ENCODE measurements at regions of chr12 and their contacts with region 1.

Region 1: GRCh38 chr12:25332143-25332542 is 81.4 kb upstream of the KRAS start:
- DNase-seq: peak in 1 of 6 donors; percentile 58
- ATAC-seq: peak; percentile 22 to 77 (median 48)
- H3K4me3 ChIP-seq: no peak overlapping the region
- H3K27ac ChIP-seq: peak overlapping the region in 1 of 4 donors; percentile 54
- H3K4me1 ChIP-seq: peaks cover 0 to 4% (median 4%) of the 10 kb centered on the region in 3 donors
- H3K27me3 ChIP-seq: no peaks in the 10 kb centered on the region
- CTCF ChIP-seq: no peak

Region 2: DNA sequence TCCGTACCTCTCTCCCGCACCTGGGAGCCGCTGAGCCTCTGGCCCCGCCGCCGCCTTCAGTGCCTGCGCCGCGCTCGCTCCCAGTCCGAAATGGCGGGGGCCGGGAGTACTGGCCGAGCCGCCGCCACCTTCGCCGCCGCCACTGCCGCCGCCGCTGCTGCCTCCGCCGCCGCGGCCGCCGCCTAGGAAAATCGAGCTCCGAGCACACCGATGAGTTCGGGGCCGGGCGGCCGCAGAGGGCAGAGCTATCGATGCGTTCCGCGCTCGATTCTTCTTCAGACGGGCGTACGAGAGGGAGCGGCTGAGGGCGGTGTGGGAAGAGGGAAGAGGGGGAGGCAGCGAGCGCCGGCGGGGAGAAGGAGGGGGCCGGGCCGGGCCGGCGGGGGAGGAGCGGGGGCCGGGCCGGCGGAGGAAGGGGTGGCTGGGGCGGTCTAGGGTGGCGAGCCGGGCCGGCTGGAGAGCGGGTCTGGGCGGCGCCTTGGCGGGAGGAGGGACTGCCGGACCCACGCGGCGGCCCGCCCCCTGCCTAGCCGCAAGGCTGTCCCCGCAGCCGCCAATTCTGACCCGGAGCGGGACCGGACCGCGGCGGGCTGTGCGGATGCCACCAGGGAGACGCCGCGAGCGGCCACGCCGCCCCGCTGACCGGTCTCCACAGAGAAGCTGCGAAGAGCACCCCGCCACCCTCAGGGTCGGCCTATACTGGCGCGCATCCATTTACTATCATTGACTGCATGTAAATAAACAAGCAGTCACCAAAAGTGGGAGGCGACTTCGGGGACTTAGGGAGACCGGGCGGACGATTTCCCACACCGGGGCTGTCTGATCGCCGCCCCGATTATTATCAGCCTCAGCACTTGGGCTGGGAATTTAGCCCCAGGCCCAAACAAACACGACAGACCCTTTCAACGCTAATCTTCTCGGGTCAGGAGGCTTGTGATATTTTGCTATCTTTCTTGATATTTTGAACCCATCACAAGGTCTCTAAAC is 81.1 kb before region 1 on chr12 and contains the start of gene KRAS:
- intact Hi-C with region 1: loop called in 1 of 3 experiments (anchors 5 kb)
- DNase-seq: peak; percentile 95 to 99 (median 97)
- ATAC-seq: peak; percentile 87 to 93 (median 91)
- H3K4me3 ChIP-seq: peak within 1 kb of the TSS; percentile 78 to 96 (median 88)
- H3K27ac ChIP-seq: peak within 1 kb of the TSS; percentile 84 to 95 (median 90)
- H3K4me1 ChIP-seq: peaks cover 23 to 44% (median 24%) of the 10 kb centered on the region in 3 donors
- H3K27me3 ChIP-seq: no peaks in the 10 kb centered on the region
- CTCF ChIP-seq: no peak
- total RNA-seq, gene KRAS: 7.3 to 17.6 (median 8.9) TPM